ENCODE measurements at regions of chr6 and their contacts with region 1.

Region 1: GRCh38 chr6:148760568-148761526 is 14.0 kb downstream of the UST start:
- DNase-seq: peak; percentile 73
- ATAC-seq: peak; percentile 54
- H3K4me3 Mint-ChIP-seq: peak overlapping the region; percentile 84
- H3K27ac Mint-ChIP-seq: peak overlapping the region; percentile 93
- H3K4me1 Mint-ChIP-seq: peaks cover 98% of the 10 kb centered on the region
- H3K27me3 Mint-ChIP-seq: no peaks in the 10 kb centered on the region
- CTCF ChIP-seq: no peak

Region 2: GRCh38 chr6:148520109-148520841 is 240.6 kb before region 1 on chr6:
- CTCF ChIA-PET with region 1: no interaction called
- POLR2A ChIA-PET with region 1: interaction called, 6 read pairs
- intact Hi-C with region 1: loop called (anchors 1 kb)
- DNase-seq: peak; percentile 68
- ATAC-seq: peak; percentile 96
- H3K4me3 Mint-ChIP-seq: peak overlapping the region; percentile 64
- H3K27ac Mint-ChIP-seq: peak overlapping the region; percentile 82
- H3K4me1 Mint-ChIP-seq: peaks cover 66% of the 10 kb centered on the region
- H3K27me3 Mint-ChIP-seq: no peaks in the 10 kb centered on the region
- CTCF ChIP-seq: no peak

Region 3: GRCh38 chr6:148620579-148621298 is 140.1 kb before region 1 on chr6:
- CTCF ChIA-PET with region 1: no interaction called
- POLR2A ChIA-PET with region 1: no interaction called
- intact Hi-C with region 1: no loop called
- DNase-seq: no peak
- ATAC-seq: peak; percentile 56
- H3K4me3 Mint-ChIP-seq: no peak overlapping the region
- H3K27ac Mint-ChIP-seq: no peak overlapping the region
- H3K4me1 Mint-ChIP-seq: peaks cover 5% of the 10 kb centered on the region
- H3K27me3 Mint-ChIP-seq: no peaks in the 10 kb centered on the region
- CTCF ChIP-seq: no peak

Region 4: DNA sequence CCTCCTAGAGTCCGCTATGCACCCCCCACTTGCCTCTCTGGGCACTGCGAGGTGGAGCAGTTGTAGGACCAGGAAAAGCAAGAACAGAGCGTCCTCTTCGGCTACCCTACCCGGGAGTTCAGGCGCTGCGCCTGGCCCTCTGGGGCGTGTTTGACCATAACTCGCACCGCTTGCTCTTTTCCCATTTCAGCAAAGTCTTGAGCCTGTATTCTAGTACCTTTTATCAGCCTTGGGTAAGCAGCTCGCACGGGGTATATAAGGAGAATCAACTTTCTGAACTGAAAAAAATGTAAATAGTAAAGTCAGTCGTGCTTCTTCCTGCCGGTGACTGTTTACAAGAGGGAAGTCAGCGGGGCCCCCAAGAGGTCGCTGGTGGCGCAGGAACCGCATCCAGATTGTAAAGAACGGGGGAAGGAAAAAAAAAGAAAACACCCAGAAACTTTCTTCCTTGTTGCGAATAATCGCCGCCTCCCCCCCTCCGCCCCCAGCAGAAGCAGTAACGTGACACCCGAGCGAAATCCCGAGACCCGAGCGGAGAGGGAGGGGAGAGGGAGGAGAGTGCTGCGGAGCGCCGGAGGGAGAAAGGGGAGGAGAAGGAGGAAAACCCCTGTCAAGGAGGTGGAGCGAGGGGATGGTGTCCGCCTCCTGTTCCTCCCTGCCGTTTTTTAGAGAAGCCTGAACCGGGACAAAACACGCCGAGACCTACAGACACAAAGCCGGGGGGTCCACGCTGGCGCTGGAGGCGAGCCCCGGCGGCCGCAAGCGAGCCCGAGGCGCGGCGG is 14.3 kb before region 1 on chr6 and contains the start of gene UST:
- CTCF ChIA-PET with region 1: interaction called, 31 read pairs
- POLR2A ChIA-PET with region 1: interaction called, 139 read pairs
- intact Hi-C with region 1: loop called (anchors 1 kb)
- DNase-seq: peak; percentile 55
- ATAC-seq: peak; percentile 47
- H3K4me3 Mint-ChIP-seq: peak within 1 kb of the TSS; percentile 95
- H3K27ac Mint-ChIP-seq: peak within 1 kb of the TSS; percentile 94
- H3K4me1 Mint-ChIP-seq: peaks cover 42% of the 10 kb centered on the region
- H3K27me3 Mint-ChIP-seq: no peaks in the 10 kb centered on the region
- CTCF ChIP-seq: no peak
- total RNA-seq, gene UST: 14.3 and 18.1 TPM in 2 replicates

Region 5: GRCh38 chr6:148790817-148791216 is 30.0 kb after region 1 on chr6:
- CTCF ChIA-PET with region 1: no interaction called
- POLR2A ChIA-PET with region 1: interaction called, 4 read pairs
- intact Hi-C with region 1: loop called (anchors 2 kb)
- DNase-seq: no peak
- ATAC-seq: peak; percentile 79
- H3K4me3 Mint-ChIP-seq: no peak overlapping the region
- H3K27ac Mint-ChIP-seq: peak overlapping the region; percentile 5
- H3K4me1 Mint-ChIP-seq: peaks cover 31% of the 10 kb centered on the region
- H3K27me3 Mint-ChIP-seq: no peaks in the 10 kb centered on the region
- CTCF ChIP-seq: no peak

Region 6: GRCh38 chr6:148885136-148885870 is 124.5 kb after region 1 on chr6:
- CTCF ChIA-PET with region 1: no interaction called
- POLR2A ChIA-PET with region 1: interaction called, 11 read pairs
- intact Hi-C with region 1: loop called (anchors 1 kb)
- DNase-seq: no peak
- ATAC-seq: no peak
- H3K4me3 Mint-ChIP-seq: no peak overlapping the region
- H3K27ac Mint-ChIP-seq: no peak overlapping the region
- H3K4me1 Mint-ChIP-seq: peaks cover 22% of the 10 kb centered on the region
- H3K27me3 Mint-ChIP-seq: no peaks in the 10 kb centered on the region
- CTCF ChIP-seq: no peak

Region 7: GRCh38 chr6:149545754-149546528 is 785.1 kb after region 1 on chr6 and contains the start of gene PPIL4:
- CTCF ChIA-PET with region 1: no interaction called
- POLR2A ChIA-PET with region 1: no interaction called
- intact Hi-C with region 1: loop called (anchors 10 kb)
- DNase-seq: peak; percentile 98
- ATAC-seq: peak; percentile 88
- H3K4me3 Mint-ChIP-seq: peak within 1 kb of the TSS; percentile 95
- H3K27ac Mint-ChIP-seq: peak within 1 kb of the TSS; percentile 96
- H3K4me1 Mint-ChIP-seq: peaks cover 37% of the 10 kb centered on the region
- H3K27me3 Mint-ChIP-seq: no peaks in the 10 kb centered on the region
- CTCF ChIP-seq: peak; percentile 77
- total RNA-seq, gene PPIL4: 20.9 and 24.0 TPM in 2 replicates